ENCODE measurements at regions of chr22 and their contacts with region 1.

Region 1: DNA sequence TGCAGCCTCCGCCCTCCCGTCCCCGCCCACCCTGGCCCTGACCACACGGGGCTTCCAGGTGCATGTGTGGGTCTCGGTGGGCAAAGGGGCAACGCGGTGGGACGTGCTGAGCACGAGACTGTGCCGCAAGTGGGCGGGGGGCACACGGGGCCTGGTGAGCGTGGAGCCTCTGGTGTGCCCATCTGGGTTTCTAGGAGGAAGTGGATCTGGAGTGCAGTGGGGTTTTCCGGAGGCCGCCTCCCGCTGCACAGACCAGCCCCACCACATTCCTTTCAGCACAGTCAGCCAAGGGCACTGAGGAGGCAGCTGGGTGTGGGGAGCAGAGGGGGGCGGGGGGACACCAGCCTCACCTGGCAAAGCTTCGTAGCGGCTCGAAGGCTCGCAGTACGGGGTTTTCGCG is 12.2 kb upstream of the MAPK11 start:
- DNase-seq: no peak
- H3K4me3 ChIP-seq: peak overlapping the region in 3 of 4 donors; percentile 18 to 40 (median 31)
- H3K27ac ChIP-seq: peak overlapping the region; percentile 75 to 89 (median 87)
- H3K4me1 ChIP-seq: peaks cover 14 to 95% (median 24%) of the 10 kb centered on the region in 3 donors
- H3K27me3 ChIP-seq: no peaks in the 10 kb centered on the region
- CTCF ChIP-seq: no peak
- POLR2A ChIP-seq: peak in 1 of 4 donors; percentile 14

Region 2: GRCh38 chr22:50221410-50222300 is 60.7 kb before region 1 on chr22:
- intact Hi-C with region 1: no loop called
- DNase-seq: no peak
- H3K4me3 ChIP-seq: no peak overlapping the region
- H3K27ac ChIP-seq: no peak overlapping the region
- H3K4me1 ChIP-seq: peaks cover 0 to 11% (median 4%) of the 10 kb centered on the region in 3 donors
- H3K27me3 ChIP-seq: no peaks in the 10 kb centered on the region
- CTCF ChIP-seq: no peak
- POLR2A ChIP-seq: no peak

Region 3: DNA sequence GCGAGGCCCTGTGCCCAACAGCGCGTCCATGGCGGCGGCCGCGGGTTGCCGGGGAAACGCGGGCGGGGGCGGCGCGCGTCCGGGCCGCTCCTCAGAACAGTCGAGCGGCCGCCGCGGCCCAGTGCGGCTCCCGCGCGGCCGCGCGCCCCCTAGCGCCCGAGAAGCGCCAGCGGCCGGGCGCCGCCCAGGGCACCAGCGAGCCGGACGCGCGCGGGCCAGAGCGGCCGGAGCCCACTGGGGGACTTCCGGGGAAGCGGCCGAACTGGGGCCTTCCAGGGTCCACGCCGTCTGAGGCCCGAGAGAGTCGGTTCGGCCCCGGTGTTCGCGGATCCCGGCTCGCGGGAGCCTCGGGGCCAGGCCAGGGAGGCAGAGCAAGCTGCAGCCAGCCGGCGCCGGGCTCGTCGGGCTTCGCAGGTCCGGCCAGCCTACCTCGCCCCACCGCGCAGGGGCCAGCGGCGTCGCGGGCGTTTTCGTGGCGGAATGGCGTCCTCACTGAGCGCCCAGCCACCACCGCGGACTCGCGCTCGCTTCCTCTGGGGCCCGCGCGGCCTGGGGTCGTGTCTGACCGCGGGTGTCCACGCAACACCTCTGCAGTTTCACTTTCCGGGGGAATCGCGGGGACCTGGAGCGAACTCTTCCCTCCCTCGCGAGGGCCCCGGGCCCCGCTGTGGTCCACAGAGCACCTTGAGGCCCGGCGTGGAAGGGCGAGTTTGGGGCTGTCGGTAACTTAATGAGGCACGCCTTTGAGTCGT is 44.8 kb after region 1 on chr22 and contains the start of gene DENND6B:
- intact Hi-C with region 1: loop called (anchors 5 kb)
- DNase-seq: no peak
- H3K4me3 ChIP-seq: peak within 1 kb of the TSS; percentile 58 to 95 (median 76)
- H3K27ac ChIP-seq: peak within 1 kb of the TSS; percentile 87 to 97 (median 96)
- H3K4me1 ChIP-seq: peaks cover 15 to 30% (median 17%) of the 10 kb centered on the region in 3 donors
- H3K27me3 ChIP-seq: no peaks in the 10 kb centered on the region
- CTCF ChIP-seq: peak in 5 of 6 experiments; percentile 30 to 92 (median 88)
- POLR2A ChIP-seq: peak in 2 of 4 donors; percentile 20 to 48
- total RNA-seq, gene DENND6B: 0.88 to 3.6 (median 2.9) TPM

Measured in esophagus squamous epithelium (tissue), 5 donors.